AG04450 (cell line): ENCODE measurements at regions of chr11 and their contacts with region 1.

Region 1: GRCh38 chr11:12288212-12288930 is 89.0 kb upstream of the PARVA start:
- DNase-seq: peak; percentile 87
- H3K4me3 ChIP-seq: peak overlapping the region; percentile 10; the same call in 1 of the 2 replicates
- H3K27ac ChIP-seq: peak overlapping the region; percentile 99
- H3K27me3 ChIP-seq: no peaks in the 10 kb centered on the region
- CTCF ChIP-seq: peak; percentile 99

Region 2: GRCh38 chr11:12274056-12274455 is 14.3 kb before region 1 on chr11:
- CTCF ChIA-PET with region 1: no interaction called
- POLR2A ChIA-PET with region 1: no interaction called
- DNase-seq: no peak
- H3K4me3 ChIP-seq: no peak overlapping the region
- H3K27ac ChIP-seq: no peak overlapping the region
- H3K27me3 ChIP-seq: no peaks in the 10 kb centered on the region
- CTCF ChIP-seq: no peak

Region 3: GRCh38 chr11:12303421-12304149 is 15.2 kb after region 1 on chr11:
- CTCF ChIA-PET with region 1: interaction called, 24 read pairs
- POLR2A ChIA-PET with region 1: no interaction called
- DNase-seq: no peak
- H3K4me3 ChIP-seq: no peak overlapping the region
- H3K27ac ChIP-seq: no peak overlapping the region
- H3K27me3 ChIP-seq: no peaks in the 10 kb centered on the region
- CTCF ChIP-seq: no peak

Region 4: GRCh38 chr11:12318791-12319438 is 30.5 kb after region 1 on chr11:
- CTCF ChIA-PET with region 1: interaction called, 40 read pairs
- POLR2A ChIA-PET with region 1: interaction called, 14 read pairs
- DNase-seq: peak; percentile 75
- H3K4me3 ChIP-seq: no peak overlapping the region
- H3K27ac ChIP-seq: peak overlapping the region; percentile 52
- H3K27me3 ChIP-seq: no peaks in the 10 kb centered on the region
- CTCF ChIP-seq: no peak

Region 5: DNA sequence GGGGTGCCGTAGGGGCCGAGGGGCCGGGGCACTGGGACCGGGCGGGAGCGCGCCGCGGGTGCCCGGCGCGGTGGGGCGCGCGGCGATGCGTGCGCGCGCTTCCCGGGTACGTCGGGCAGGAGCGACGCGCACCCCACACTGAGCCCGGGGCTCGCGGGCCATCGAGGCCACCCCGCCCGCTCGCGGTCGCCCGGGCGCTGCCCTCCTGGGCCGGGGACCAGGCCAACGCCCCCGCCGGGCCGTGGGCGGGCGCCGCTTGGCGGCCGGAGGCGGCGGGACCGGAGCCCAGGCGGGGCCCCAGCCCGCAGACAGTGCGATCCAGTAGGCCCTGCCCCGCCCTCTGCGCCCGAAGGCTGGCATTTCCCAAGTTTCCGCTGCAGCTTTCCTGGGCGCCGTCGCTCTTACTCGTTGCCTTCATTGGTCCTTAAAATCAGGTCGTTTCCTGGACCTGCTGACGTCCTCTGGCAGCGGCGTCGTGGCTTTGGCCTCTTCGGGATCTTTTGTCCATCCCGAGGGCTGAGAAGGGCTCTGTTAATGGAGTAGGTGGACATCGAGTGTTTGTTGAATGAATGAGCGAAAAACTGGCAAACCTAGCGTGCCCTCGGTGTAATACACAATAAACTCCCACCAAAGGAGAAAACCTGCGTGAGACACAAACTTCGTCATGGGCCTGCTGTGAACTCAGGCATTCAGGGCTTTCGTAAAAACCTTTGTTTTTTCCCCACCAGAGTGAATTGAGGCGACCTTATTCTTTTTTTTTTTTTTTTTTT is 89.6 kb after region 1 on chr11:
- CTCF ChIA-PET with region 1: interaction called, 12 read pairs
- POLR2A ChIA-PET with region 1: interaction called, 4 read pairs
- DNase-seq: no peak
- H3K4me3 ChIP-seq: peak overlapping the region; percentile 89
- H3K27ac ChIP-seq: peak overlapping the region; percentile 98
- H3K27me3 ChIP-seq: no peaks in the 10 kb centered on the region
- CTCF ChIP-seq: 0 out of 2 replicates have a peak, but pooled peaks have one; percentile 5

Region 6: DNA sequence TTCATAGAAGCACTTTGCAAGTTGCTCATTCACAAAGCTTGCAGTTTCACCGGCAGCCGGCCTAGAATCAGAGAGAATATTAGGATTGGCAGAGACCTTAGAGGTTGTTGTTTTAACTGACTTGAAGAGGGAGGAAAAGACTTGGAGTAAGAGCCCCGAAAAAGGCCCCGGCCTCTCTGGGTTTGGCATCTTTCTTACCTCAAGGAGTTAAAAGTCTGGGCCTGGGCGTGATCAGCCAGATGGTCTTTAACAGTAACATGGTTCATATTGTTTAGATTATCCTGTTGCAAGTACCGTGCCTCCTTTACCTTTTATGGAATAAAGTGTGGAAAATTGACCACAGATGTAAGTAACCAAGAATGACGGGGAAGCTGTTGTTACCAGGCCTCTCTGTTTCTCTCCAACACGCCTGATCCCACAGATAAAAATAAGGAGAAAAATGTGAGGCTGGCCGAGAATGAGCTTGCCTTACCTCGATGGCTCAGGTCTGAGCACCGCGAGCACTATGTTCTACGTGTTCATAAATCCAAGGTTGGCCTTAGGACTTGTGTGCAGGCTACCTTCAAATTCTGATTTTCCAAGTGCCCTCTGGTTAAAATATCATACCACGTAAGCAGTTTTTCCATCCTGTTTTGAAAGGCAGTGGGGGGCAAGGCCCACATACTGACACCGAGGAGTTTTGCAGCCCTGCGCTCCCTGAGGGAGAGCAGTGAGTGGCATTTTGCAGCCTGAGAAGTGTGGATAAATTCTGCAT is 145.4 kb after region 1 on chr11:
- CTCF ChIA-PET with region 1: interaction called, 13 read pairs
- POLR2A ChIA-PET with region 1: interaction called, 5 read pairs
- DNase-seq: peak; percentile 95
- H3K4me3 ChIP-seq: no peak overlapping the region
- H3K27ac ChIP-seq: peak overlapping the region; percentile 99
- H3K27me3 ChIP-seq: no peaks in the 10 kb centered on the region
- CTCF ChIP-seq: no peak

Region 7: GRCh38 chr11:12888525-12889158 is 600.3 kb after region 1 on chr11:
- CTCF ChIA-PET with region 1: interaction called, 24 read pairs
- POLR2A ChIA-PET with region 1: no interaction called
- DNase-seq: peak; percentile 81
- H3K4me3 ChIP-seq: no peak overlapping the region
- H3K27ac ChIP-seq: peak overlapping the region; percentile 74
- H3K27me3 ChIP-seq: no peaks in the 10 kb centered on the region
- CTCF ChIP-seq: peak; percentile 80